GM12878 (cell line): ENCODE measurements at regions of chr10 and their contacts with region 1.

Region 1: DNA sequence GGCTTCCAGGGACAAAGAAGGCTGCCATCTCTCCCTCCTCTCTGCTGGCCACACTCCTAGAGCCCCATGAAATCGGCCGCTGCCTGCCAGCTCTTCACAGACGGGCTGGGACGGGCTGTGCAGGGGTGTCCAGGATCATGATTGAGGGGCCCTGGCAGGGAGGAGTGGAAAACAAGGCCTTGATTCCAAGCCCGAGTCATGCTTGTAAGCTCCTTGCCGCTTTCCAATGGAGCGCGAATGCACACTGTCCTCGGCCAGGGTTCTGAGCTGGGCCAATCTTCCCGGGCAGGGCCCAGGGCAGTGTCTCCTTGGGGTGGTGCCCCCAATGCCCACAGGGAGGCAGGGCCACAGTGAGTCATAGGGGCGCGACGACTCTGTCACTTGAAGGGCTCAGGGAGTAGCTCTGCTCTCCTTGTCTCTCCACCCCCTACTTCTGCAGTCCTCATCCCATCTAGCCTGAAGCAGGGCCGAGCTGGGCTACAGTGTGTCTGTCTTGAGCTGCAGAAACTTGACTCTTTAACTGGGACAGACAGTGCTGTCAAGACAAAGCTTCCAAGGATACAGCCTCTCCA is 186.2 kb upstream of the SVIL start:
- DNase-seq: no peak
- ATAC-seq: no peak
- H3K4me3 ChIP-seq: no peak overlapping the region
- H3K27ac ChIP-seq: no peak overlapping the region
- H3K4me1 ChIP-seq: no peaks in the 10 kb centered on the region
- H3K27me3 ChIP-seq: no peaks in the 10 kb centered on the region; a peak in 2 of 4 replicates
- CTCF ChIP-seq: no peak
- EP300 ChIP-seq: no peak
- POLR2A ChIP-seq: no peak
- RAD21 ChIP-seq: no peak

Region 2: DNA sequence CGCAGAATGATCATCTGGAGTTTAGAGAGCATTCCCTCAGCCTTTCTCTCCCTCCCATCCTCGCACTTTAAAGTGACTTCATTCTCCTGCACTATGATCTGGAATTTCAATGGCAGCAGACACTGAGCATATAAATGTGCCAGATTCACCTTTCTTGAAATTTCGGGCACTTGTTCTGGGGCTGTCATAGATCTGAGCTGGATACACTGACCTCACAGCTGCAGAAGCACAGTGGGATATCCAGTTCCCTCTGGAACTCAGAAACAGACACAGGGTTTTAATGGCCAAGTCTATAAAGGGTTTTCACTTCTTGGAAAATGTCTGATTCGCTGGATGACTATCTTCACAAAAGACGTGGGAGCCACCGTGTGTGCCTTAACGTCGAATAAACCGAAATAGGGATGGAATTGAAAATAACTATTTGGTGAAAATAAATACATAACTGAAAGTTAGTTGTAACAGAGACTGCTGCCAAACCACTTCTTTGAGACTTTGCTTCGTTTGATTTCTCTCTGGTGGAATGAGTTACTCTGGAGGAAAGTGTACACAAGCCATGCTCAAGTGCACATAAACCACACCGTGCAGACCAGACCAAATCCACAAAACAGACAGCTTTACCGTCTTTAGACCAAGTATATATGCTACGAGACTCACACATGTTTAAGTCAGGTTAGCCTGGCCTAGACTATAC is 312.3 kb before region 1 on chr10:
- CTCF ChIA-PET with region 1: no interaction called
- POLR2A ChIA-PET with region 1: no interaction called
- RAD21 ChIA-PET with region 1: no interaction called
- SMC1A ChIA-PET with region 1: no interaction called
- in situ Hi-C with region 1: no loop called
- intact Hi-C with region 1: no loop called
- DNase-seq: no peak
- ATAC-seq: no peak; the same call in 2 of the 3 replicates
- H3K4me3 ChIP-seq: no peak overlapping the region
- H3K27ac ChIP-seq: no peak overlapping the region
- H3K4me1 ChIP-seq: no peaks in the 10 kb centered on the region
- H3K27me3 ChIP-seq: no peaks in the 10 kb centered on the region
- CTCF ChIP-seq: no peak
- EP300 ChIP-seq: no peak
- POLR2A ChIP-seq: no peak
- RAD21 ChIP-seq: no peak

Region 3: GRCh38 chr10:29780096-29780495 is 40.9 kb before region 1 on chr10:
- CTCF ChIA-PET with region 1: no interaction called
- POLR2A ChIA-PET with region 1: no interaction called
- RAD21 ChIA-PET with region 1: no interaction called
- SMC1A ChIA-PET with region 1: no interaction called
- in situ Hi-C with region 1: no loop called
- intact Hi-C with region 1: no loop called
- DNase-seq: no peak
- ATAC-seq: no peak
- H3K4me3 ChIP-seq: no peak overlapping the region
- H3K27ac ChIP-seq: no peak overlapping the region
- H3K4me1 ChIP-seq: no peaks in the 10 kb centered on the region
- H3K27me3 ChIP-seq: no peaks in the 10 kb centered on the region
- CTCF ChIP-seq: no peak
- EP300 ChIP-seq: no peak
- POLR2A ChIP-seq: no peak
- RAD21 ChIP-seq: no peak

Region 4: GRCh38 chr10:29881336-29881771 is 60.4 kb after region 1 on chr10:
- CTCF ChIA-PET with region 1: no interaction called
- POLR2A ChIA-PET with region 1: no interaction called
- RAD21 ChIA-PET with region 1: no interaction called
- SMC1A ChIA-PET with region 1: no interaction called
- in situ Hi-C with region 1: no loop called
- intact Hi-C with region 1: loop called (anchors 10 kb)
- DNase-seq: no peak
- ATAC-seq: no peak
- H3K4me3 ChIP-seq: no peak overlapping the region
- H3K27ac ChIP-seq: no peak overlapping the region
- H3K4me1 ChIP-seq: no peaks in the 10 kb centered on the region
- H3K27me3 ChIP-seq: peaks cover 3 to 6% of the 10 kb centered on the region in 2 experiments; a peak in 1 of 4 replicates
- CTCF ChIP-seq: no peak
- EP300 ChIP-seq: no peak
- POLR2A ChIP-seq: no peak
- RAD21 ChIP-seq: no peak